Ascending aorta (tissue), 2 donors: ENCODE measurements at regions of chr4 and their contacts with region 1.

Region 1: GRCh38 chr4:146342600-146343192 is 128.4 kb downstream of the REELD1 start:
- DNase-seq: no peak
- H3K4me3 ChIP-seq: no peak overlapping the region
- H3K27ac ChIP-seq: no peak overlapping the region
- H3K4me1 ChIP-seq: no peaks in the 10 kb centered on the region
- H3K27me3 ChIP-seq: no peaks in the 10 kb centered on the region
- CTCF ChIP-seq: peak in 2 of 3 experiments; percentile 34 to 69

Region 2: DNA sequence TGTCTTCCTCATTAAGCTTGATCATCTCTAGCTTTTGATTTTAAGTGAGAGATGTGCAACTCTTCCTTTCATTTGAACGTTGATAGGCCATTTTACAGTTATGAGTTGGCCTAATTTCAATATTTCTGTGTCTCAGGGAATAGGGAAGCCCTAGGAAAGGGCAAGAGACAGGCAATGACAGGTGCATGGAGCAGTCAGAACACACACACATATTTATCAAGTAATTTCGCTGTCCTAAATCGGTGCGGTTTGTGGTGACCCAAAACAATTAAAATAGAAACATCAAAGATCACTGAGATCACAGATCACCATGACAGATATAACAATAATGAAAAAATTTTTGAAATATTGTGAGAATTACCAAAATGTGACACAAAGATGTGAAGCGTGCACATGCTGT is 254.8 kb before region 1 on chr4:
- intact Hi-C with region 1: no loop called
- DNase-seq: no peak
- H3K4me3 ChIP-seq: no peak overlapping the region
- H3K27ac ChIP-seq: no peak overlapping the region
- H3K4me1 ChIP-seq: no peaks in the 10 kb centered on the region
- H3K27me3 ChIP-seq: no peaks in the 10 kb centered on the region
- CTCF ChIP-seq: no peak

Region 3: DNA sequence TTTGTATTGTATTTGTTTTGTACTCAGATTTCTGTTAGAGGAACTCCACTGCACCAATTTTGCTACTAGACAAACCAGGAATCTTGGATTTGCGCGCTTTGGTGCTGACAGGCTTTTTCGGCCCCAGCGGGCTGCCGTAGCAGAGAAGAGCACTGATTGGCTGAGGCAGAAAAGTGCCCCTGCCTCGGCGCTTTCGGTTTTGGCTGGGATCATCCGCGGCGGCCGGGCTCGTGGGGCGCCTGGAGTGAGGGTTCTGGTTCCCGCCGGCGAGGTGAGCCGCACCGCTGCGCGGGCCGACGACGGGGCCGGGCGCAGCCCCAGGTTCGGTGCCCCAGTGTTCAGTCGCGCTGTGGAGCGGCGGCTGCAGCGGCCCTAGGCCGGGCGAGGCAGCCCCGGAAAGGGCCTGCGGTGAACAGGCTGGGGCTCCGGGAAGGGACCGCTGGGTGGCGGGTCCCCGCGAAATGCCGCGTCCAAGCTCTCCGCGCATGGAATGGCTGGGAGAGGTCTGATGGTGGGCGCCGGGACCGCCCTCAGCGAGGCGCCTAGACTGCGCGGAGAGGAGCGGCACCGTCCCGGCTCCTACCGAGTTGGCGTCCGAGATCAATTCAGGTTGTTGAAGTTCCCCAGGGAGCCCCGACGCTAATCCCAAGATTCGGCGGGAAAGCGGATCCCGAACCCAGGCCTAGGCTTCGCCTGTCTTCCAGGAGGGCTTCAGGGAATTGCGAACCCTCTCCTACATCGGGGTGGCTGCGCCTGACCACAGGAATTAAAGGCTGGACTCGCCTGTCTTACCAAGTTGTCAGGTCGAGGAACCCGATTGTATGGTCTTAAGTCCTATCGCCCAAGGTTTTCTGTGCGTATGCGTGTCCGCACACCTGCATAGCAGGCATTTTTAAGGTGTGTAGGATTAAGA is 166.9 kb before region 1 on chr4 and contains the start of gene LSM6:
- intact Hi-C with region 1: no loop called
- DNase-seq: peak; percentile 39 to 91
- H3K4me3 ChIP-seq: peak within 1 kb of the TSS; percentile 95 to 99
- H3K27ac ChIP-seq: peak within 1 kb of the TSS; percentile 95
- H3K4me1 ChIP-seq: peaks cover 2 to 17% of the 10 kb centered on the region in 2 donors
- H3K27me3 ChIP-seq: no peaks in the 10 kb centered on the region
- CTCF ChIP-seq: peak in 1 of 3 experiments; percentile 21
- total RNA-seq, gene LSM6: 10.7 TPM

Region 4: DNA sequence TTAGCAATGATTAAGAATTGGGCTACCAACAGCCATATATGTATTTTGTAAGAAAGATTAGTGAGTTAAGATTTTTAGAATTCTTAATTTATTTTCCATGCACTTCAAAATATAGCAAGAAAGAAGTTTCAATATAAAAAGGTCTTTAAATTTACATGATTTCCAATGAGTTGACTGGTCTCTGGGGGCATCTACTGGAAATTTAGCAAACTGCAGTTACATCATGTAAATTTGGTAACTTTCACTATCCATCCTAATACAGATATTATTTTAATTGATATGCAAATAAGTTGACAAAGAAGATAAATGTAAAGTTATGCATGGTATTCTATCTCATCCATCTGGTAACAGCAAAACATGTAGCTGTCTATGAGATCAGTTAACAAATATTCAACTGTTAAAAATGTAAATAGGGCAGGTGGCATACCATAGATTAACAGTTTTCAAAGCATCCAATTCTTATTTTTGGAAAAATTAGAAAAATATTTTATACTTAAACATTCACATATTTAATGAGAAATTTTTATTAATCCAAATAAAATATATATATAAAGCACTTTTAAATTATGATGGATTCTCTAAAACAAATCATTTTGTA is 573.9 kb after region 1 on chr4:
- intact Hi-C with region 1: loop called (anchors 5 kb)
- DNase-seq: no peak
- H3K4me3 ChIP-seq: no peak overlapping the region
- H3K27ac ChIP-seq: no peak overlapping the region
- H3K4me1 ChIP-seq: no peaks in the 10 kb centered on the region
- H3K27me3 ChIP-seq: no peaks in the 10 kb centered on the region
- CTCF ChIP-seq: peak; percentile 40 to 60 (median 53)